ENCODE measurements at regions of chr5 and their contacts with region 1.

Region 1: DNA sequence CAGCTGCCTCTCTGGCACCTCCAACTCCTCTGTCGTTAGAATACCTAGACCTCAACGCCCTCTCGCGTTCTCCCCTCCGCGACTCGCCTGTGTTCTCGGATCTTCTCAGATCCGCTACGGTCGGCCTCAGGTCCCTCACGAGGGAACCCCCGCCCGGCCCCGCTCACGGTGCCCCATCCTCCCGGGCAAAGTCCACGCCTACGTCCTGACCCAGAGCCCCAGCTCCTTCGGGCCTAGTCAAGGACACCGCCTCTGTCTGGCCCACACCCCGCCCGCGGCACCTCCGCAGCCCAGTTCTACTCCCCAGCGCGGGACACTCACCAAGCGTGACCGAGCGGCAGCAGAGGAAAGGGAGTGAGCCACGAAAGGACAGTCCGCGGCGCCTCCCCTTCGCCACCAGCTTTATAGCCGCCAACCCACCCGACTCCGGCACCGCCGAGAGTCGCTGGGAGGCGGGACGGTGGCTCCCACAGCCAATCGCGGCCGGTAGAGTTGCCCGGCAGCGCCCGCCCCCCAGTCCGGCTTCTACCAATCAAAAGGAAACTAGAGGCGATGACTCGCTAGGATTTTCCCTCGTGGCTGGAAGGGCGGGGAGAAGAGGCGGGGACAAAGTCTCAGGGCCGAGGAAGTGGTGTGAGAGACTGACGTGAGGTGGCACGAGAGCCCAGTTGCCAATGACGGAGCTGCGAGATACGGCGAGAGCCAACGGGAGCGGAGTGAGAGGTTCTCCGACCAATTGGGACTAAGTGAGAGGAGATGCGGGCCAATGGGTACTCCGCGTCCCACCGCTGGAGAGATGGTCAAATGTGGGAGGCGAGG is at the start of gene HMGCS1:
- DNase-seq: peak; percentile 99
- ATAC-seq: peak; percentile 90
- H3K4me3 Mint-ChIP-seq: peak within 1 kb of the TSS; percentile 98
- H3K27ac Mint-ChIP-seq: peak within 1 kb of the TSS; percentile 98
- H3K4me1 Mint-ChIP-seq: peaks cover 62% of the 10 kb centered on the region
- H3K27me3 Mint-ChIP-seq: no peaks in the 10 kb centered on the region
- CTCF ChIP-seq: no peak
- total RNA-seq, gene HMGCS1: 63.6 to 65.7 TPM

Region 2: DNA sequence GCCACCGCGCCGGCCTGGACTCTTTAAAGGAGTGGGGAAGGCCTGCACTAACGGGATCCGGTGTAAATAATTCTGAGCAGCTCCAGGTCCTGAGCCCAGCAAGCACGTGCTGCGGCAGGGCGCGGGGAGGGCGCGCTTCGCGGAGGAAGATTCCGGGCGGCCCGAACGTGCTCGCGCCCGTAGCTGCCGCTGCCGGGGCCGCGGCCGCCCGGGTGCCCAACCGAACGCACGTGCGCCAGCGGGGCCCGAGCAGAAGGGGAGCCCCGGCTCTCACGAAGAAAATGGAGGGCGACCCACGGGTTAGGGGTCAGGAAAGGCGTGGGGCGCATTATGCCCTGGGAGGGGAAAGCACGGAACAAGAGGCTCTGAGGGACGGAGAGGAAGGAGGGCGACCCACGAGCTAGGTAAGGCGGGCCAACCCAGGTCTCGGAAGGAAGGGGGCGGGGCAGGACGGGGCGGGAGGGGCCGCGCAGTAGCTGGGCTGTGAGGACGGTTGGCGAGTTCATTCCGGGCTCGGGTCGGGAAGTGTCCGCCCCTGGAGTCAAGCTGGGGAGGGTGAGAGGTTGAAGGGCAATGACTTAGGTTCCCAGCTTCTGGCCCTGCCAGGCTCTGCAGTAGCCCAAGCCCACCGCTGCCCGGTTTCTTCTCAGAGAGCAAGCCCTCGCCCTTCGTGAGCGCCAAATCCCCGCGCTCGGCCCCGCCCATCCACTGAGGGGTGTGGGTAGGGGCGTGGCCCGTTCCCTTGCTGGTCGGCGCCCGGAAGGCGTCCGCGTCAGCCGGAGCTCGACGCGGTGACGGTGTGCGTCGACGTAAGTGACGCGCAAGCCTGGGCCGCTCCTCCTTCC is 192.3 kb before region 1 on chr5 and contains the start of gene ZNF131:
- CTCF ChIA-PET with region 1: interaction called, 4 read pairs
- POLR2A ChIA-PET with region 1: interaction called, 13 read pairs
- intact Hi-C with region 1: loop called (anchors 10 kb)
- DNase-seq: peak; percentile 97
- ATAC-seq: peak; percentile 93
- H3K4me3 Mint-ChIP-seq: peak within 1 kb of the TSS; percentile 89
- H3K27ac Mint-ChIP-seq: peak within 1 kb of the TSS; percentile 96
- H3K4me1 Mint-ChIP-seq: peaks cover 32% of the 10 kb centered on the region
- H3K27me3 Mint-ChIP-seq: no peaks in the 10 kb centered on the region
- CTCF ChIP-seq: no peak
- total RNA-seq, gene ZNF131: 34.8 to 36.6 TPM

Region 3: DNA sequence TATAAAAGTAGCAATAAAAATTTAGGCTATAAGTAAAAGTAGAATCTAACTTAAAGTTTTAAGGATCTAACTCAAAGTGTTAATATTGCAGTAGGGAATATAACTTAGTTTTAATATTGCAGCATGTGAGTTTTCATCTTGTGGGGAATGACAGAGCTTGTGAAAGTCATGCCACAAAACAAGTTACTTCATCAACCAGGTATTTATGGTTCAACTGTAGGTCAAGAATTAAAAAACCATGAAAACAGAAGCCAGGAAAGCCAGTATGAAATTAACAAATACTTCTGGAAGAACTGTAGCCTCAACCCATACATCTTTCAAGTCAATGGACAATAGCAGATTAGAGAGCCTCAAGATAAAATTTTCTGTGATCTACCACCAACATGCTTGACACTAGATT is 19.0 kb before region 1 on chr5:
- CTCF ChIA-PET with region 1: interaction called, 3 read pairs
- POLR2A ChIA-PET with region 1: interaction called, 10 read pairs
- intact Hi-C with region 1: no loop called
- DNase-seq: no peak
- ATAC-seq: no peak
- H3K4me3 Mint-ChIP-seq: no peak overlapping the region
- H3K27ac Mint-ChIP-seq: no peak overlapping the region
- H3K4me1 Mint-ChIP-seq: peaks cover 4% of the 10 kb centered on the region
- H3K27me3 Mint-ChIP-seq: no peaks in the 10 kb centered on the region
- CTCF ChIP-seq: no peak

Region 4: GRCh38 chr5:43338862-43339261 is 25.6 kb after region 1 on chr5:
- CTCF ChIA-PET with region 1: interaction called, 3 read pairs
- POLR2A ChIA-PET with region 1: interaction called, 11 read pairs
- intact Hi-C with region 1: no loop called
- DNase-seq: peak; percentile 21
- ATAC-seq: peak; percentile 43
- H3K4me3 Mint-ChIP-seq: no peak overlapping the region
- H3K27ac Mint-ChIP-seq: peak overlapping the region; percentile 10
- H3K4me1 Mint-ChIP-seq: peaks cover 11% of the 10 kb centered on the region
- H3K27me3 Mint-ChIP-seq: peaks cover 17% of the 10 kb centered on the region
- CTCF ChIP-seq: no peak

Measured in activated CD8-positive, alpha-beta T cell treated with anti-CD3 and anti-CD28 coated beads for 36 hours (primary cell).